ENCODE measurements at regions of chr1 and their contacts with region 1.

Region 1: GRCh38 chr1:248686815-248687214 is 15.8 kb downstream of the OR14I1 start:
- DNase-seq: peak; percentile 44
- H3K4me3 Mint-ChIP-seq: no peak overlapping the region
- H3K27ac Mint-ChIP-seq: no peak overlapping the region
- H3K4me1 Mint-ChIP-seq: peaks cover 6% of the 10 kb centered on the region
- H3K27me3 Mint-ChIP-seq: peaks cover 8% of the 10 kb centered on the region

Region 2: DNA sequence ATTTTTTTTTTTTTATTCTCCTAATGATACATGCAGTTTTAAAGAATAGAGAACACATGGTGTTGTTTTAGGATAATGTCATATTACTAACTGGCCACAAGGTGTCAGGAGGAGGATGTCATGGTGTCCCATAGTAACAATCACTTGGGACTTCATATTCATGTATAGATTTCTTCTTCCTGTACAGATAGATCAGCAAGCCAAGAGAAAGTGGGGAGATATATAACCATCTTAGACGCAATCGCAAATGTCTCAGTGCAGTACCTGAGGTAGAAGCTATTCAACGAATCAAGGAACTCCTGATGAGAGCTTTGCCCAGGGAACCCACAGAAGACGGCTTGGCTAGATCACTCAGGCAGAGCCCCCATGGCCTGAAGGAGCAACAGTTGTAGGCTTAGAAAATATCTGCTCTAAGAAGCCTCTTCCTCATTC is 64.2 kb before region 1 on chr1:
- CTCF ChIA-PET with region 1: interaction called, 24 read pairs
- intact Hi-C with region 1: loop called (anchors 1 kb)
- DNase-seq: peak; percentile 19
- H3K4me3 Mint-ChIP-seq: no peak overlapping the region
- H3K27ac Mint-ChIP-seq: no peak overlapping the region
- H3K4me1 Mint-ChIP-seq: peaks cover 2% of the 10 kb centered on the region
- H3K27me3 Mint-ChIP-seq: no peaks in the 10 kb centered on the region

Measured in activated naive CD4-positive, alpha-beta T cell treated with anti-CD3 and anti-CD28 coated beads for 36 hours (primary cell).